Right ventricle myocardium inferior (tissue), 1 donor: ENCODE measurements at regions of chr6 and their contacts with region 1.

Region 1: DNA sequence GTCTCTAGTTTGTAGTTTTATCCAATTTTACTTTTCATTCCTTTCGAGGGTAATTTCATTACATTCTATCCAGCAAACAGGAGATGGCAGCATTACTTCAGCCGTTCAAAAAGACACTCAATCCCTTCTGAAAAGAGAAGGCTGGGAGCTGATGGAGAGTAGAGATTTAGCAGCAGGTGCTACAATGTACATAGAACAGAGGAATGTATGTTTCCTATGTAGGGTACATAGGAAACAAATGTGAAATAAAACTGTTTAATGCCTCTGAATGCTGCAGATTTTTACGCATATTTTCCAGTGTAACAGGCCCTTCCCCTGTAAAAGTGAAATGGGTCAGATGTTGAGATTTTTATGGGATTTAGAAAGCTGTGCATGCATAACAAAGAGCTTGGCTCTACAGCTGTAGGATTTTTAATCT is 16.0 kb downstream of the RPS12 start:
- DNase-seq: no peak
- ATAC-seq: no peak

Region 2: GRCh38 chr6:132082421-132082820 is 747.9 kb before region 1 on chr6:
- intact Hi-C with region 1: no loop called
- DNase-seq: no peak
- ATAC-seq: no peak

Region 3: DNA sequence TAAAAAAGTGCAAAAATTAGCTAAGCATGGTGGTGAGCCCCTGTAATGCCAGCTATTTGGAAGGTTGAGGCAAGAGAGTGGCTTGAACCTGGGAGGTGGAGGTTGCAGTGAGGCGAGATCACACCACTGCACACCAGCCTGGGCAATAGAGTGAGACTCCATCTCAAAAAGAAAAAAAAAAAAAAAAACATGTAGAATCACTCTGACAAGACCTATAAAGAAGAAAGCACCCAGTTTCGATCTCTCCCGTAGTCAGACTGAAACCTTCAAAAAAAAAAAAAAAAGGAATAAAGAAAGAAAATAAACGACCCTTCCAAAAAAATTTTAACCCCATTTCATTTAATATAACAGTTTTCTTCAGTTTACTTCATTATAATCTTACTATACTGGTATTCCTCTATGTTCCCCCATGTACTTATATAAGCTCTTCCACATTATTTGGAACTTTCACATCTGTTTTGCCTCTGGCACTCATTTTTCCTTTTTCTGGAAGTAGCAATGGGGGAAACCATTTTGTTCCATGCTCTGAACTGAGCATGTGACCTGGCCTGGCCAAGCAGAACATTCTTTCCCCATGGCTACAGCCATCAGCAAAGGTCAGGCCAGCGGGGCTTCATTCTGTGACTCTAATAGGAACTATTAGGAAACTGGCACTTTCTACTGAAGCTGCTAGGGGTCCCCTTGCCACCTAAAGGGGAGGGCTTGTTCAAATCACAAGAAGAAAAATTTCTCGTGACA is 41.5 kb before region 1 on chr6:
- intact Hi-C with region 1: no loop called
- DNase-seq: no peak
- ATAC-seq: no peak

Region 4: DNA sequence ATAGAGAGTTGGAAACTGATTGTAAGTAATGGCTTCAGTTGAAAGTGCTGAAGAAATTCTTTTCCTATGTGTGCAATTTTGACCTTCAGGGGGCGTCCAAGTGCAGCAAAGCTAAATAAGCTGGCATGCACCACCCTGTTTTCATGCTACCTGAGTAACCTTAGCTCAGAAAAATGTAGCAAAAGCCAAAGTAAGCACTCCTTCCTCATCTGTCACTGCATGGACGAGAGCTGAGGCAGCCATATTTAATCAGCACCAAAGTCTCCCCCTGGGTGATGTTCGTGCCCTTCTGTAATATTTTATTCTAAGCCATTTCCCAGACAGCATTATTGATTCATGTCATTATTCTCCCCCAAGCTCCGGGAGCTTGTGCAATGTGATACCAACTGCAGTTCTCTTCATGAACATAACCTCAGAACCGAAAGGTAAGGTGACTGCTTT is 107.1 kb after region 1 on chr6:
- intact Hi-C with region 1: loop called (anchors 10 kb)
- DNase-seq: no peak
- ATAC-seq: no peak

Region 5: GRCh38 chr6:133553652-133554051 is 723.3 kb after region 1 on chr6:
- intact Hi-C with region 1: loop called (anchors 2 kb)
- DNase-seq: no peak
- ATAC-seq: no peak